Activated CD4-positive, alpha-beta memory T cell treated with anti-CD3 and anti-CD28 coated beads, Interleukin-2, amount 10 ng/mL, durations not matched to agents 7 days and 5 days (primary cell): ENCODE measurements at regions of chr2 and their contacts with region 1.

Region 1: DNA sequence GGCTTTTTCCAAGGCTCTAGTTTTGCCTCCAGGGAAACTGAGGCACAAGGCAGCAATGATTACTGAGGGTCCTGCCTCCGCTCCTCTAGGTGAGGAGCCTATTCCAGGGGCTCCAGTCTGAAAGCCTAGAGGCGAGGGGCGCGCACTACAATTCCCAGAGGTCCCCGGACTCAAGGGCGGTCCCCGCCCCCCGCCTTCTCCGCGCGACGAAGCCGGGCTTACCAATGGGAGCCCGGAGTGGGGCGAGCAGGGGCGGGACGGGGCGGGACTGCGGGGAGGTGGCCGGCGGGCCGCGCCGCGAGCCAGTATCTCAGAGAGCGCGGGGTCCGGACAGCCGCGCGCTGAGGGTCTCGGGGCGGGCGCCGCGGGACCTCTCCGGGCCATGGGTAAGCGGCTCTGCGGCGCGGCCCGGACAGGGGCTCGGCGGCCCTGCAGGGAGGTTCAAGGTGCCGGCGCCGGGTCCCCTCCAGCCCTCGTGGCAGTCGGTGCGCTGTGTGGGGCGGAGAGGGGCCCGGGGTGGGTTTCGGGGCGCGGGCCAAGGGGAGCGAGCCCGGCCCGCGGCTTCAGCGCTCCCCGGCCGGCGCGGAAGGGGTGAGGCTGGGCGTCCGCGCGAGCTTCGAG is at the start of gene ARID5A:
- DNase-seq: peak; percentile 94
- H3K4me3 Mint-ChIP-seq: peak within 1 kb of the TSS; percentile 90
- H3K27ac Mint-ChIP-seq: peak within 1 kb of the TSS; percentile 97
- H3K4me1 Mint-ChIP-seq: peaks cover 68% of the 10 kb centered on the region
- H3K27me3 Mint-ChIP-seq: peaks cover 8% of the 10 kb centered on the region
- total RNA-seq, gene ARID5A: 80.0 to 86.8 TPM

Region 2: DNA sequence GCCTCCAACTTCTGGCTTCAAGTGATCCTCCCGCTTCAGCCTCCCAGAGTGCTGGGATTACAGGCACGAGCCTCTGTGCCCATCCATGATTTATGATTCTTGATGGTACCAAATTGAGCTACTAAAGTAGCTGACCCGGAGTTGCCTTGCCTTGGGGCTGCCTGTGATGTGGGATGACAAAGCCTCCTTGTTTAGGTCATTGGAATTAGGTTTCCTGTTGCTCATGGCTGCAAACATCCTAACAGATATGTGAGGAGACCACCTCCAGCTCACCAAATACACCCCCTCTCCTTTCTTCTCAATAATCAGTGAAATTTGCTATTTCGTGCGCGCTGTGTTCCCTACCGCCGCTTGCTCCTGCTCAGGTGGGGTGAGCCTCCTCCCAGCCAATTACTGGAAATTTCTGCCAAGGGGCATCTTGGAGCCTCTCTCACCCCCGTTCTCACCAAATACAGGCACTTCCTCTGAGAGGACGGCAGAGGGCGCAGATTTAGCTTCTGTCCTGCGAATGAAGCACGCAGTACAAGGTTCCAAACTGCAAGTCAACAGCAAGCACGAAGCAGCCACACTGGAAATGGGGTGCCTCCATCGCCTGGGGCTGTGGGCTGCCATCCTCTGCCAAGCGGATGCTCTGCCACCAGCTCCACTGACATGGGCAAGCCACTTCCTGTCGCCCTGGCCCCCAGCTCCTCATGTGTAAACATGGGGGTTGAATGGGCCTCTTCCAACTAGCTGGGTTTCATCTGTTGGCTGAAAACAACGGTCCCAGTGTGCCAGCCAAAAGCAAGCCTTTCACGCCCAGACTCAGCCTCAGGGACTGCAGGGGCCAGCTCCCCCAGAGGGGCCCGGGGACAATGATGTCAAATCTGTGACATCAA is 129.3 kb before region 1 on chr2:
- CTCF ChIA-PET with region 1: interaction called, 14 read pairs
- POLR2A ChIA-PET with region 1: interaction called, 29 read pairs
- DNase-seq: peak; percentile 83
- H3K4me3 Mint-ChIP-seq: no peak overlapping the region
- H3K27ac Mint-ChIP-seq: peak overlapping the region; percentile 72
- H3K4me1 Mint-ChIP-seq: peaks cover 22% of the 10 kb centered on the region
- H3K27me3 Mint-ChIP-seq: no peaks in the 10 kb centered on the region

Region 3: DNA sequence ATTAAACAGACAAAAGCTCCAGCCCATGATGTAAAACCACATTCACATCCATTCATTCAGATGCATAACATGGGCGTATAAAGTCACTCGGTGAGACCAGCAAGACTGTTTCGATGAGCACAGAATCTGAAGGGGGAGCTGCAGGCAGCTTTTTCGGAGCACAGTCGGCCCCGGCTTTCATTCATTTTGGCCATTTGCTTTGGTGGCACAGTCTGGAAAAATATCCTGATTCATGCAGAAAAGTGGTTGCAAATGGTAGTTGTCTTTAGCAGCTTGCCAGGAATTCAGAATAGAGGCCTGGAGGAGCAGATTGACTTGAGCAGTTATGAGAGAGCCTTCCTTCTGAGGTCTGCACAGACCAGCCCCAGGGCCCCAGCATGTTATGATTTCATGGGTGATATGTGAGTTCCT is 11.2 kb after region 1 on chr2:
- CTCF ChIA-PET with region 1: interaction called, 63 read pairs
- POLR2A ChIA-PET with region 1: interaction called, 221 read pairs
- DNase-seq: no peak
- H3K4me3 Mint-ChIP-seq: no peak overlapping the region
- H3K27ac Mint-ChIP-seq: no peak overlapping the region
- H3K4me1 Mint-ChIP-seq: peaks cover 49% of the 10 kb centered on the region
- H3K27me3 Mint-ChIP-seq: no peaks in the 10 kb centered on the region

Region 4: GRCh38 chr2:96594691-96595152 is 58.2 kb after region 1 on chr2:
- CTCF ChIA-PET with region 1: no interaction called
- POLR2A ChIA-PET with region 1: interaction called, 12 read pairs
- DNase-seq: peak; percentile 51
- H3K4me3 Mint-ChIP-seq: peak overlapping the region; percentile 26
- H3K27ac Mint-ChIP-seq: peak overlapping the region; percentile 92
- H3K4me1 Mint-ChIP-seq: peaks cover 65% of the 10 kb centered on the region
- H3K27me3 Mint-ChIP-seq: no peaks in the 10 kb centered on the region

Region 5: GRCh38 chr2:96888072-96889011 is 351.8 kb after region 1 on chr2:
- CTCF ChIA-PET with region 1: no interaction called
- POLR2A ChIA-PET with region 1: no interaction called
- DNase-seq: no peak
- H3K4me3 Mint-ChIP-seq: no peak overlapping the region
- H3K27ac Mint-ChIP-seq: no peak overlapping the region
- H3K4me1 Mint-ChIP-seq: peaks cover 12% of the 10 kb centered on the region
- H3K27me3 Mint-ChIP-seq: peaks cover 1% of the 10 kb centered on the region